WTC11 (cell line): ENCODE measurements at regions of chr12 and their contacts with region 1.

Region 1: GRCh38 chr12:70271025-70271424 is 27.8 kb downstream of the CNOT2 start:
- DNase-seq: no peak
- ATAC-seq: no peak
- H3K4me3 Mint-ChIP-seq: no peak overlapping the region
- H3K27ac Mint-ChIP-seq: no peak overlapping the region
- H3K4me1 Mint-ChIP-seq: peaks cover 65% of the 10 kb centered on the region
- H3K27me3 Mint-ChIP-seq: no peaks in the 10 kb centered on the region
- CTCF ChIP-seq: no peak

Region 2: GRCh38 chr12:70255311-70255710 is 15.7 kb before region 1 on chr12:
- CTCF ChIA-PET with region 1: no interaction called
- POLR2A ChIA-PET with region 1: interaction called, 11 read pairs
- DNase-seq: no peak
- ATAC-seq: no peak
- H3K4me3 Mint-ChIP-seq: no peak overlapping the region
- H3K27ac Mint-ChIP-seq: peak overlapping the region; percentile 42; the same call in 1 of the 2 replicates
- H3K4me1 Mint-ChIP-seq: peaks cover 74% of the 10 kb centered on the region
- H3K27me3 Mint-ChIP-seq: no peaks in the 10 kb centered on the region
- CTCF ChIP-seq: no peak